Naive thymus-derived CD4-positive, alpha-beta T cell (primary cell): ENCODE measurements at regions of chr22 and their contacts with region 1.

Region 1: DNA sequence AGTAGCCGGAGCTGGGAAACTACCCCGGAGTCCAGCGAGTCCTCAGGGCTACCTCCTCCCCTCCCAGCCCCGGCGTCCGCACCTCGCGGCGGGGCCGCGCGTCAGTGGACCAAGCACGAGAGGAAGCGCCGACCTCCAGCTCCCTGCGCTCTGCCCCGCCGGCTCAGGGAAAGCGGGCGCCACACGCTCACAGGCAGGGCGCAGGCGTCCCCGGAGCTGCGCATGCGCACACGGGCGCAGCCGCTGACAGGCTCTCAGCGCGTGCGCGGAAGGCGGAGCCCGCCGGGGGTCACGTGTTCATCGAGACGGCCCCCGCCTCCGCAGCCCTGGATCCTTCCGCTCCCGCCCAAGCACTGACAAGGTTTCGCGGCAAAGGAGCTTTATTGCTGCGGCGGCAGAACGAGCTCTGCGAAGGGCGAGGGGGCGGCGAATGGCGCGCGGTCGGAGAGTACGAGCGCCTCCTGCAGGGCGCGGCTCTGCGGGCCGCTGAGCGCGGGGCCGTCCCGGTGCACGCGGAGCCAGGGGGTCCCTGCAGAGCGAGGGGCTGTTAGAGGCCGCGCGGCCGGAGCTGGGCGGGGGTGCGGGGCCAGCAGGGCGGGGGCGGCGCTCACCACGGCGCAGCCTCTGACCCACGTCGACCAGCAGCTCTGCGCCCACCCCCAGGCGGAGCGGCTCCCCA is at the start of gene SCO2:
- DNase-seq: peak; percentile 97 to 99 (median 98)
- ATAC-seq: peak; percentile 77
- H3K4me3 ChIP-seq: peak within 1 kb of the TSS; percentile 77
- H3K4me3 Mint-ChIP-seq: peak within 1 kb of the TSS; percentile 77 to 96 (median 89)
- H3K27ac ChIP-seq: peak within 1 kb of the TSS; percentile 87
- H3K27ac Mint-ChIP-seq: peak within 1 kb of the TSS; percentile 78 to 93 (median 86)
- H3K4me1 ChIP-seq: peaks cover 14 to 21% of the 10 kb centered on the region in 2 donors
- H3K4me1 Mint-ChIP-seq: peaks cover 8 to 33% (median 26%) of the 10 kb centered on the region in 7 donors
- H3K27me3 ChIP-seq: no peaks in the 10 kb centered on the region
- H3K27me3 Mint-ChIP-seq: peaks cover 0 to 6% (median 0%) of the 10 kb centered on the region in 5 donors
- total RNA-seq, gene SCO2: 2.2 to 12.0 (median 5.5) TPM

Region 2: DNA sequence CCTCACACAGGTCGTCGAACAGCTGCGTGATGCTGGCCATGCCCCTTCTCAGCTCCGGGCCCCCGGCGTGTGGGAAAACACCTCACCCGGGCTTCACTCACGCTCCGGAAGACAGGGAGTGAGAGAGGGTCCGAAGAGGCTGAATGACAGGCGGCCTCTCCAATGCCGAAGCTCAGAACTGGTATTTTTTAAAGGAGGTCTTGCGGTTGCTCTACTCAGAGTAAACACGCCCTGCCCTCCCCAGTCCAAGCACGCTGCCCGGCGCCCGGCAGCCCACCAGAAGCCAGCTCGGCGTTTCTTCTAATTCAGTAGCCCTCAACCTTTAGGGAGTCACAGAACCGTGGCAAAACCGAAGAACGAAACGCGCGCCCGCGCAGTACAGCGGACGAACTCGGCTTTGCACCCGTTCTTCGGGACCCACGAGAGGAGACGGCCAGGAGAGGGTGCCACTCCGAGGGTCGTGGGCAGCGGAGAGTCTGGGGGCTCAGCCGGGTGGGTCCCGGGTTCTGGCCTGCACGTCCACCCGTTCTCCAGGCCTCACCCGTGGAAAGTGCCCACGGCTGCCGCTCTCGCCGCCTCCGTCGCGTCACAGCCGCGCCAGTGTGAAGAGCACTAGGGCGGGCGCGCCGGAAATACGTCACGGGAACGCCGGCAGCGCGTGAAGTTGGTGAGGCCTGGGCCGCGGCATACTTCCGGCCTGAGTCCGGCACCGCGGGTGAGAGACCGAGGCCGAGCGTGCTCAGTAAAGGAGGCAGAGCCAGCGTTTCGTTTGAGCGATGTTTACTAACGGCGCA is 280.9 kb before region 1 on chr22 and contains the start of gene TUBGCP6:
- CTCF ChIA-PET with region 1: no interaction called
- POLR2A ChIA-PET with region 1: interaction called, 14 read pairs
- intact Hi-C with region 1: loop called in 1 of 2 experiments (anchors 1 kb)
- DNase-seq: peak; percentile 88 to 95 (median 93)
- ATAC-seq: peak; percentile 88
- H3K4me3 ChIP-seq: peak within 1 kb of the TSS; percentile 73
- H3K4me3 Mint-ChIP-seq: peak within 1 kb of the TSS; percentile 76 to 100 (median 98)
- H3K27ac ChIP-seq: peak within 1 kb of the TSS; percentile 96
- H3K27ac Mint-ChIP-seq: peak within 1 kb of the TSS; percentile 91 to 100 (median 100)
- H3K4me1 ChIP-seq: peaks cover 39 to 51% of the 10 kb centered on the region in 2 donors
- H3K4me1 Mint-ChIP-seq: peaks cover 16 to 52% (median 40%) of the 10 kb centered on the region in 7 donors
- H3K27me3 ChIP-seq: no peaks in the 10 kb centered on the region
- H3K27me3 Mint-ChIP-seq: no peaks in the 10 kb centered on the region
- total RNA-seq, gene TUBGCP6: 67.8 to 146 (median 134) TPM

Region 3: DNA sequence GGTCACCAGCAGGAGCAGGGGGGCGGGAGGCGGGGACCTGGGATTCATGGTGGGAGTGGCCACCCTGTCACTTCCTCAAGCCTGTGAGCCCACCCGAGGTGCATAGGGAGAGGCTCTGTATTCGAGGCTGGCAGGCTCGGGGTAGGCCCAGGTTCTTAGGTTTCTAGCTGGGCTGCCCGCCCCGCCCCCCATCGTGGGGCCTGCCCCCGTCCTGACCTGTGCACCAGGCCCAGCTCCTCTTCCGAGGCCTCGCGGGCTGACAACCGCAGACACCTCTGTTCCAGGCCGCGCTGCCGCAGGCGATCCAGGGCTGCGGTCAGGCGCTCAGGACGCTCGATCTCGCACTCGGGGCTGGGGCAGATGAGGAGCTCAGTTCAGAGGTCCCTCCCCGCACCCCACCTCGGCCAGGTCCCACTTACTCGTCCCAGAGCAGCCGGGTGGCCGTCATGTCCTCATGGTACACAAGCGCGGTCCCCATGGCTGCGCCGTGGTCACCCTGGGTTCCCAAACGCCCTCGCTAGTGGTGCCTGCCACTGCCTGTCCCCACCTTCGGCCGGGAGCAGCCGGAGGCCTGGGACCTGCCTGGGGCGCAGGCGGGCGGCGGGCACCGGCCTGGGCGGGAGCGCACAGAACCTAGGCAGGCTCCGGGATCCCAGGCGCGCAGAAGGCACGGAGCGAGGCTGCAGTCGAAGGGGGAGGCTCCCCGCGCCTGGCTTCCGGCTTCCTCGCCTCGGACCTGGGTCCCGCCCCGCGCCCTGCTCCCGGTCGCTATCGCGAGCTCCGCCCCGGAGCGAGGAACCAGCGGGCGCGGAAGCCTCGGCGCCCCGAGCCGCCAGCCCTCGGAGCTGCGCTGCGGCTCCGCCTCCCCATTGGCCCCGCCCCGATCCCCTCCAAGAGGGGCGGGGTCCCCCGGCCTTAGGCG is 274.7 kb before region 1 on chr22 and contains the start of gene HDAC10:
- CTCF ChIA-PET with region 1: interaction called, 3 read pairs
- POLR2A ChIA-PET with region 1: interaction called, 14 read pairs
- intact Hi-C with region 1: loop called (anchors 1 to 5 kb)
- DNase-seq: peak; percentile 60 to 86 (median 71)
- ATAC-seq: peak; percentile 78
- H3K4me3 ChIP-seq: peak within 1 kb of the TSS; percentile 71
- H3K4me3 Mint-ChIP-seq: peak within 1 kb of the TSS; percentile 61 to 88 (median 80)
- H3K27ac ChIP-seq: peak within 1 kb of the TSS; percentile 71
- H3K27ac Mint-ChIP-seq: peak within 1 kb of the TSS in 7 of 9 donors; percentile 31 to 80 (median 65)
- H3K4me1 ChIP-seq: peaks cover 25 to 38% of the 10 kb centered on the region in 2 donors
- H3K4me1 Mint-ChIP-seq: peaks cover 4 to 26% (median 17%) of the 10 kb centered on the region in 7 donors
- H3K27me3 ChIP-seq: no peaks in the 10 kb centered on the region
- H3K27me3 Mint-ChIP-seq: no peaks in the 10 kb centered on the region
- total RNA-seq, gene HDAC10: 95.9 to 139 (median 105) TPM

Region 4: DNA sequence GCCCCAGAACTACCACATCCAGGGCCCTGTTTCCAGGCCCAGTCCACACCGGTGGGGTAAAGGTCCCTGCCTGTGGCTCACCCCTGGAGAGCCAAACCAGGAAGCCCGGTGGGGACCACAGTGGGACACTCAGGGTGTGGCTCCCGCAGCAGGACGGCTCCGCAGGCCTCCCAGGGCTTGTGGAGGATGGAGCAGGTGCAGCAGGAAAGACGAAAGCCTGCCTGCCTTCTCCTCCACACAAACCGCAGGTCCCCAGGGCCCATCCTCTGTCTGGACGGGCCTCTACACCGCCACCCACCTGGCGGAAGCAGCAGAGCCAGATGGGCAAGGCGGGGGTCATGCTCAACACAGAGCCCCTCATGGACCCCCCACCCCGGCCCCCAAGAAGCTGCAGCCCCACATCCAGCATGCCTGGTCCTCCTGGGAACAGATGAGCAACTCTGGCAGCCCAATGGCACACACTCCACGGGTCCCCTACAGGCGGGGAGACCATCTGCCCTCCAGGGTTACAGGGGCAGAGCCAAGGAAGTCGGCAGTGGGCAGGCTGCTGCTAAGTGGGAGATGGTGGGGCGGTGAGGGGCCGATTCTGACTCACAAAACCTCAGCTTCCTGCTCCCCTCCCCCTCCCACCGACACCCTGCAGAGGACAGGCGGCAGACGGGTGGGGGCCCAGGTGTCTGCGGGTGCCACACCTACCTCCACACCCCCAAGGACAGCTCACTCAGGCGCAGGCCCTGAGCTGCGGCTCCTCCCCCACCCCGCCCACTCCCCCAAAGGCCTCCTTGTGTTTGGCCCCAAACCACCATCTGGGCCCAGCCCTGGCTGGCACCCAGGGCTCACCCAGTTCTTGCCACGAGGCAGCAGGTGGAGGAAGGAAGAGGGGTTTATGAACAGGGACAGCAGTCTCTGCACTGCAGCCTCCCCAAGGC is 55.9 kb before region 1 on chr22:
- CTCF ChIA-PET with region 1: interaction called, 18 read pairs
- POLR2A ChIA-PET with region 1: interaction called, 19 read pairs
- intact Hi-C with region 1: loop called (anchors 1 to 5 kb)
- DNase-seq: peak; percentile 77 to 96 (median 92)
- ATAC-seq: peak; percentile 95
- H3K4me3 ChIP-seq: peak overlapping the region; percentile 65
- H3K4me3 Mint-ChIP-seq: peak overlapping the region; percentile 76 to 100 (median 90)
- H3K27ac ChIP-seq: peak overlapping the region; percentile 90
- H3K27ac Mint-ChIP-seq: peak overlapping the region; percentile 88 to 99 (median 93)
- H3K4me1 ChIP-seq: peaks cover 53 to 57% of the 10 kb centered on the region in 2 donors
- H3K4me1 Mint-ChIP-seq: peaks cover 45 to 69% (median 61%) of the 10 kb centered on the region in 7 donors
- H3K27me3 ChIP-seq: no peaks in the 10 kb centered on the region
- H3K27me3 Mint-ChIP-seq: no peaks in the 10 kb centered on the region

Region 5: DNA sequence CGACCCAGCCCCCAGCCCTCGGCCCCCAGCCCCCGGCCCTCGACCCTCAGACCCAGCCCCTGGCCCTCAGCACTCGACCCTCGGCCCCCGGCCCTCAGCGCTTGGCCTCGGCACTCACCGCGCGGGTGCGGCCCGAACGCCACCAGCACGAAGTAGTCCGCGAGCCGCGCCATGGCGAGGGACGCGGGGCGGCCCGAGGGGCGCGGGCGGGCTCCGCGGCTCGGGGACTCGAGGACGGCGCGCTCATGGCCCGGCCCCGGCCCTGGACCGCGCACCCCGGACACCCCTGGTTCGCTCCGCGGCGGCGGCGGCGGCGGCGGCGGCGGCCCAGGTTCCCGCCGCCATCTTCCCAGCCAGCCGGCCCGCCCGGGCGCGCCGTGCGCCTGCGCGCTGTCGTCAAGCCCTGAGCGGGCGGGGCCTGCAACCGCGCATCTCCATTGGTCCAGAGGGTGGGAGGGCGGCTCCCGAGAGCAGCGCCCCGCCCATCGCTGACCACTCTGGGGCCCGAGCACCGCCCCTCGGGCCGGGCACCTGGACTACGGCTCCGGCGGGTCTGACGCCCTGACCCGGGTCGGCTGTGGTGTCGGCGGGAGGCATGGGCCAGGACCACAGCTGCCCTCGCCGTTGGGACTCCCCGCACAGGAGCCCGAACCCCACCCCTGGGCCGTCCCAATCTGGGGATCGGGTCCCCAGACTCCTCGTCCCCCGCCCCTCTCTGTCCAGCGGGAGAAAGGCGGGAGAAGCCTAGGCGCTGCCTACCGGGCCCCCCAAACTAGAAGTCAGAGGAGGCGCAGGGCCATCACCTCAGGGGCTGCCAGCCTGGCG is 50.6 kb before region 1 on chr22 and contains the start of gene SBF1:
- CTCF ChIA-PET with region 1: interaction called, 18 read pairs
- POLR2A ChIA-PET with region 1: interaction called, 19 read pairs
- intact Hi-C with region 1: loop called (anchors 1 to 5 kb)
- DNase-seq: peak; percentile 75 to 94 (median 85)
- ATAC-seq: peak; percentile 89
- H3K4me3 ChIP-seq: peak within 1 kb of the TSS; percentile 72
- H3K4me3 Mint-ChIP-seq: peak within 1 kb of the TSS; percentile 93 to 100 (median 96)
- H3K27ac ChIP-seq: peak within 1 kb of the TSS; percentile 90
- H3K27ac Mint-ChIP-seq: peak within 1 kb of the TSS; percentile 91 to 97 (median 93)
- H3K4me1 ChIP-seq: peaks cover 39 to 42% of the 10 kb centered on the region in 2 donors
- H3K4me1 Mint-ChIP-seq: peaks cover 29 to 56% (median 47%) of the 10 kb centered on the region in 7 donors
- H3K27me3 ChIP-seq: no peaks in the 10 kb centered on the region
- H3K27me3 Mint-ChIP-seq: peaks cover 0 to 19% (median 0%) of the 10 kb centered on the region in 5 donors
- total RNA-seq, gene SBF1: 161 to 209 (median 181) TPM

Region 6: DNA sequence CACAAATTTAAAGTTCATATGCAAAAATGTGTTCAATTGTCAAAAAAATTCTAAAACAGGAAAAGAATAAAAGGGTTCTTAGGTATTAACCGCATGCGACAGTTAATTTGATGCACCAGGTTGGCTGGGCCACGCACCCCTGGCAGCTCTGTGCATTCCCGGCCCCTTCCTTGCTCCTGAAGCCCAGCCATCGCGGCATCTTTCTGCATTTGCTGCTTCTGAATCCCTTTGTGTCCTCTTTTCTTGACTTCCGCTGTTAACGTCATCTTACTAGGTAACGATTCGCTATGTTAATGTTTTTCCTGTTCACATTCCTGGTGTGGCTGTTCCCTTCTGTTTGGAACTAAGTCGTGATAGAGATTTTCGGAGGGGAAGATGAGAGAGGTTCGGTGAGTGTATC is 12.2 kb after region 1 on chr22:
- CTCF ChIA-PET with region 1: interaction called, 20 read pairs
- POLR2A ChIA-PET with region 1: interaction called, 127 read pairs
- intact Hi-C with region 1: loop called in 1 of 2 experiments (anchors 1 kb)
- DNase-seq: no peak
- ATAC-seq: no peak
- H3K4me3 ChIP-seq: no peak overlapping the region
- H3K4me3 Mint-ChIP-seq: peak overlapping the region in 4 of 10 donors; percentile 5 to 65 (median 56)
- H3K27ac ChIP-seq: peak overlapping the region; percentile 99
- H3K27ac Mint-ChIP-seq: peak overlapping the region; percentile 74 to 100 (median 99)
- H3K4me1 ChIP-seq: peaks cover 14 to 24% of the 10 kb centered on the region in 2 donors
- H3K4me1 Mint-ChIP-seq: peaks cover 29 to 79% (median 41%) of the 10 kb centered on the region in 7 donors
- H3K27me3 ChIP-seq: no peaks in the 10 kb centered on the region
- H3K27me3 Mint-ChIP-seq: peaks cover 0 to 2% (median 0%) of the 10 kb centered on the region in 5 donors

Region 7: DNA sequence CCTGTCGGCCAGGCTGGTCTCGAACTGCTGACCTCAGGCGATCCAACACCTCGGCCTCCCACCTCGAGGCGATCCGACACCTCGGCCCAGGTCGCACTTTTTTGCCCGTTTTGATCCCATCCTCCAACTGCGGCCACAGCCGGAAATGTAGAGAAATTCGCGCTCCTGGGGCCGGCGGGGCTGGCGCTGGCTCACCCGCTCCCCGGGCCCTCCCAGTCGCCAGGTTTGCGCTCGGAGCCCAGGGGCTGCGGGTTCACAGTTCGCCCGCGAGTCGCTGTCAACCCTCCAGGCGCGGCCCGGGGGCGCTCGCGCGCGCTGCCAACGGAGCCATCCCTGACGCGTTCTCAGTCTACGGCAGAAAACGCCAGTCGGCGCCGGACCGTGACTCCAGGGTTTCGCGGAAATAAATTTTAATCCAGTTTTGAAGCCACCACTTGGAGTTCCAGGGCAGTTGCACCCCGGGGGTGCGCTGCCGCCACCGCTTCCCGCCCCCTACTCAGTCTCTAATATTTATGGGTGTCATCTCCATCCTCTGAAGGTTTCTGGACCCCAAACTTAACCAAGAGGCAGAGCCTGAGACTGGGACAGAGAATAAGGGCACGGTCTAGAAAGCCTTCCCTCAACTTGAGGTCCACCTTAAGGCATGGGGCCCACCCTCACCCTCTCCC is 18.7 kb after region 1 on chr22:
- CTCF ChIA-PET with region 1: interaction called, 31 read pairs
- POLR2A ChIA-PET with region 1: interaction called, 127 read pairs
- intact Hi-C with region 1: loop called (anchors 1 to 2 kb)
- DNase-seq: peak; percentile 60 to 80 (median 71)
- ATAC-seq: peak; percentile 63
- H3K4me3 ChIP-seq: peak overlapping the region; percentile 67
- H3K4me3 Mint-ChIP-seq: peak overlapping the region; percentile 53 to 77 (median 70)
- H3K27ac ChIP-seq: peak overlapping the region; percentile 45
- H3K27ac Mint-ChIP-seq: peak overlapping the region in 6 of 9 donors; percentile 49 to 93 (median 75)
- H3K4me1 ChIP-seq: peaks cover 33 to 40% of the 10 kb centered on the region in 2 donors
- H3K4me1 Mint-ChIP-seq: peaks cover 31 to 59% (median 36%) of the 10 kb centered on the region in 7 donors
- H3K27me3 ChIP-seq: no peaks in the 10 kb centered on the region
- H3K27me3 Mint-ChIP-seq: no peaks in the 10 kb centered on the region